ENCODE measurements at regions of chr5 and their contacts with region 1.

Region 1: GRCh38 chr5:143707806-143708205 is 104.2 kb upstream of the HMHB1 start:
- DNase-seq: no peak
- ATAC-seq: no peak
- H3K4me3 ChIP-seq: no peak overlapping the region
- H3K4me3 Mint-ChIP-seq: no peak overlapping the region
- H3K27ac ChIP-seq: no peak overlapping the region
- H3K27ac Mint-ChIP-seq: no peak overlapping the region
- H3K4me1 ChIP-seq: no peaks in the 10 kb centered on the region
- H3K4me1 Mint-ChIP-seq: no peaks in the 10 kb centered on the region
- H3K27me3 ChIP-seq: no peaks in the 10 kb centered on the region
- H3K27me3 Mint-ChIP-seq: peaks cover 2 to 9% of the 10 kb centered on the region in 2 donors

Region 2: GRCh38 chr5:143635888-143636287 is 71.9 kb before region 1 on chr5:
- CTCF ChIA-PET with region 1: interaction called in 1 of 2 experiments, 13 read pairs
- POLR2A ChIA-PET with region 1: no interaction called
- DNase-seq: no peak
- ATAC-seq: no peak
- H3K4me3 ChIP-seq: no peak overlapping the region
- H3K4me3 Mint-ChIP-seq: no peak overlapping the region
- H3K27ac ChIP-seq: no peak overlapping the region
- H3K27ac Mint-ChIP-seq: no peak overlapping the region
- H3K4me1 ChIP-seq: no peaks in the 10 kb centered on the region
- H3K4me1 Mint-ChIP-seq: no peaks in the 10 kb centered on the region
- H3K27me3 ChIP-seq: no peaks in the 10 kb centered on the region
- H3K27me3 Mint-ChIP-seq: no peaks in the 10 kb centered on the region

Region 3: GRCh38 chr5:143721925-143722324 is 14.1 kb after region 1 on chr5:
- CTCF ChIA-PET with region 1: interaction called in 1 of 2 experiments, 20 read pairs
- POLR2A ChIA-PET with region 1: no interaction called
- DNase-seq: no peak
- ATAC-seq: no peak
- H3K4me3 ChIP-seq: no peak overlapping the region
- H3K4me3 Mint-ChIP-seq: no peak overlapping the region
- H3K27ac ChIP-seq: no peak overlapping the region
- H3K27ac Mint-ChIP-seq: no peak overlapping the region
- H3K4me1 ChIP-seq: no peaks in the 10 kb centered on the region
- H3K4me1 Mint-ChIP-seq: peaks cover 0 to 2% (median 0%) of the 10 kb centered on the region in 3 donors
- H3K27me3 ChIP-seq: no peaks in the 10 kb centered on the region
- H3K27me3 Mint-ChIP-seq: no peaks in the 10 kb centered on the region